Activated naive CD4-positive, alpha-beta T cell treated with anti-CD3 and anti-CD28 coated beads for 36 hours (primary cell): ENCODE measurements at regions of chr4 and their contacts with region 1.

Region 1: DNA sequence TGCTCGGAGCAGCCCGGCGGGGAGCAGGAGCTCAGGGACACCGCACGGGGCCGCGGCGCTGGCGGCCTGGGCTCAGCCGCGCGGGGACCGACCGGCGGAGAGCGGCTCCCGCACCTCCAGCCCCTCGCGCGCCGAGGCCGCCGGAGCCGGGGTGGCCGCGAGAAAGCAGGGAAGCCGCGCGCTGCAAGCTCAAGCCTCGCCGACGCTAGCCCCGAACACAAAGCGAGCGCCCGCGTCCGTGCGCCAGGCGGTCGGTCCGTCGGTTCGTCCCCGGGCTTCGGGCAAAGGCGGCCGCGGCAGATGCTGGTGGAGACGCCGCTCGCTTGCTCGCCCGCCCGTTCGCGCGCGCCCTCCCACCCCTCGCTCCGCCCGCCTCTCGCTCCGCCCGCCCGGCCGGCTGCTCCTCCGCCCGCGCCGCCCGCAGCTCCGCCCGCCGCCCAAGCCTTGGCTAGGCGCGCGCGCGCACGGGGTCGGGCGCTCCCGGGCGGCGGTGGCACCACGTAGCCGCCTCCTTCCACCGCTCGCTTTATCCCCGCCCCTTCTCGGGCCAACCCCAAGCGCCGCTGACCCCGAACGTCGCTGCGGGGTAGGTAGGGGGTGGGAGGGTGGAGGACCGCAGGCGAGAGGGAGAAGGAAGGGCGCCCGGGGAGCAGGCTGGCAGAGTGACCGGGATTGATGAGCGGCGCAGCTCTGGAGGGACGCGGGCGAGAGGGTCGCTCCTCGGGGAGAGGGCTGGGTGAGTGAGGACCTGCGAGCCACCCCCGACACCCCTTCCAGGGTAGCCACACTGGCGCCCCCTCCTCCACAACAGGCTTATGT is at the start of gene TSPAN5:
- DNase-seq: peak; percentile 77
- H3K4me3 Mint-ChIP-seq: peak within 1 kb of the TSS; percentile 98
- H3K27ac Mint-ChIP-seq: peak within 1 kb of the TSS; percentile 71
- H3K4me1 Mint-ChIP-seq: peaks cover 74% of the 10 kb centered on the region
- H3K27me3 Mint-ChIP-seq: no peaks in the 10 kb centered on the region
- total RNA-seq, gene TSPAN5: 12.5 to 13.1 TPM

Region 2: GRCh38 chr4:98260579-98261290 is 397.8 kb before region 1 on chr4:
- CTCF ChIA-PET with region 1: no interaction called
- intact Hi-C with region 1: loop called (anchors 1 kb)
- DNase-seq: peak; percentile 95
- H3K4me3 Mint-ChIP-seq: peak overlapping the region; percentile 93
- H3K27ac Mint-ChIP-seq: peak overlapping the region; percentile 94
- H3K4me1 Mint-ChIP-seq: peaks cover 43% of the 10 kb centered on the region
- H3K27me3 Mint-ChIP-seq: no peaks in the 10 kb centered on the region

Region 3: DNA sequence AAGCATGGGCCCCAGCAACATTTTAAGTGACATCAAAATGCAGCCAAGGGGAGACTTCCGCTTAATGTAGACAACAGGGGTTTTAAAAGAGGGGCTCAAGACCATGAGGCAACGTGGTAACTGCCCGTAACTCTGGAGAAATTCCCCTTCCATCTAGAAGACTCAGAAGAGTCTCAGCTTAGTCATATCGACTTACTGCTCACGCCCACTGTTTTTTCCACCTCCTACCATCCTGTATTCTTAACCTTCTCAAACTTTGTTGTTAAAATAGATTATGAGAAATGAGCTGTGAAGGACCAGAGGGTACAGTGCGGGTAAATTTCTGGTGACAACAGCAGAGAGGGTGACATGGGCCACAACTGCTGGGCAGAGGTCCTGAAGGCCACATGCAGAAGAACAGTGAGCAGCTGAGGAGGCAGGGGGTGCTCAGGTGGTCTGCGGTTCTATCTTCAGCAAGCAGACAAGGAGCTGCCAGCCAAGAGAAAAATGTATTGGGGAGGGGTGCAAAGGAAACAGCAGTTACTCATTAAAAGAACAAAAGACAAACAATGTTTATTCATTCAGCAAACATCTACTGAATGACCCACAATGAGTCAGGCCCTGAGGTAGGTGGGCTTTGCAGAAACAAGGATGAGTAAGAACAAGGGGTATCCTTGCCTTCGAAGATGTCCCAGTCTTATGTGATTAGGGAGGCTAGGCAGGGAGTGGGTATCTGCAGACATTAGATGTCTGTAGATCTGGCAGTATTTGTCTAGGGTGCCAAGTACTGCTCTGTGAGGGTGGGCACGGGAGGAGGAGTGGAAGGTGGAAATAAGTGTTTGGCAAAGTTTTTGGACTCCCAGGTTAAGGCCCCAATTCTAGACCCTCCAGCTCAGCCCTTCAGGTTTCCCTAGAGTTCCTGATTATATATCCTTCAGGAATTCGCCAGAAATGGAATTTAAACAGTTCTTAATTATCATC is 175.4 kb before region 1 on chr4:
- CTCF ChIA-PET with region 1: interaction called, 4 read pairs
- intact Hi-C with region 1: loop called (anchors 1 kb)
- DNase-seq: peak; percentile 74
- H3K4me3 Mint-ChIP-seq: peak overlapping the region; percentile 45
- H3K27ac Mint-ChIP-seq: peak overlapping the region; percentile 94
- H3K4me1 Mint-ChIP-seq: peaks cover 78% of the 10 kb centered on the region
- H3K27me3 Mint-ChIP-seq: no peaks in the 10 kb centered on the region

Region 4: DNA sequence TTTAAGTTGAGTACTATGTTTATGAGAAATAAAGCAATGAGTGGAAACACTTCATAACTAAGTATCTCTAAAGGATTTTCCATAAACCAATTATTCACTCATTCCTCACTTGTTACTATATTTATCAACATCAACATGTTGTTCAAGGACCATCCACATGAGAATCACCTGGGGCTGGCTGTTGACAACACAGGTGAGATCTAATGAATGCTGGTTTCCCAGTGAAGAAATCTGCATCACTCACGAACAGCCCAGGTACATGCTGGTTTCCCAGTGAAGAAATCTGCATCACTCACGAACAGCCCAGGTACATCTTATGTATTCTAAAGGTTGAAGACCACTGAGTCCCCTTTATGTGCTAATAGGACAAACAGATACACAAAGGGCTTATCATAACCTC is 32.6 kb before region 1 on chr4:
- CTCF ChIA-PET with region 1: no interaction called
- intact Hi-C with region 1: loop called (anchors 1 kb)
- DNase-seq: no peak
- H3K4me3 Mint-ChIP-seq: no peak overlapping the region
- H3K27ac Mint-ChIP-seq: no peak overlapping the region
- H3K4me1 Mint-ChIP-seq: peaks cover 51% of the 10 kb centered on the region
- H3K27me3 Mint-ChIP-seq: no peaks in the 10 kb centered on the region

Region 5: DNA sequence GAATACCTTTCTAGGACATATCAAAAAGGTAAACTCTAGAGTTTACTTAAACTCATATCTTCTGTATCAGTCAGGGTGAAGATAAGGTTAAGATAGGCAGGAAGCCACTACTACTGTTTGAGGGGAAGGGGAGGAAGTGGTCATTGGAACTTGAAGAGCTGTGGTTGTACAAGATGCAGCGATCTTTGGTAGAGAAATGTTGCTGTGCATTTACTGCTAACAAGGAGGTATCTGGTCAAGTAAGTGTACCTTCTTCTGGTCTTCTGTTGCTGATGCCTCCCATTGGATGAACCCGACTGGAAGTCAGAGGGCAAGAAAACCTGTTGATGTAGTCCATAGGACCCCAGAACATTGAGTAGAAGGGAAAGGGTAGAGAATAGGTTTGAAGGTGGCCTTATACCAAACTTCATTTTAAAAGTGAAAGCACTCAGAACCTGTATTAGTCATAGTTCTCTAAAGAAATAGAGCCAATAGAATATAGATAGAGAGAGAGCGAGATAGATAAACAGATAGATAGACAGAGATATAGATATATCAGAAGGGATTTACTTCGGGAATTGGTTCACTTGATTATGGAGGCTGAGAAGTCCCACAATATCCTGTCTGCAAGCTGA is 47.8 kb after region 1 on chr4:
- CTCF ChIA-PET with region 1: no interaction called
- intact Hi-C with region 1: loop called (anchors 1 kb)
- DNase-seq: peak; percentile 15
- H3K4me3 Mint-ChIP-seq: no peak overlapping the region
- H3K27ac Mint-ChIP-seq: peak overlapping the region; percentile 39
- H3K4me1 Mint-ChIP-seq: peaks cover 24% of the 10 kb centered on the region
- H3K27me3 Mint-ChIP-seq: no peaks in the 10 kb centered on the region

Region 6: GRCh38 chr4:98995183-98996055 is 336.9 kb after region 1 on chr4 and contains the start of gene METAP1:
- CTCF ChIA-PET with region 1: no interaction called
- intact Hi-C with region 1: loop called (anchors 1 kb)
- DNase-seq: peak; percentile 95
- H3K4me3 Mint-ChIP-seq: peak within 1 kb of the TSS; percentile 84
- H3K27ac Mint-ChIP-seq: peak within 1 kb of the TSS; percentile 92
- H3K4me1 Mint-ChIP-seq: peaks cover 38% of the 10 kb centered on the region
- H3K27me3 Mint-ChIP-seq: no peaks in the 10 kb centered on the region
- total RNA-seq, gene METAP1: 65.6 to 70.1 TPM

Region 7: DNA sequence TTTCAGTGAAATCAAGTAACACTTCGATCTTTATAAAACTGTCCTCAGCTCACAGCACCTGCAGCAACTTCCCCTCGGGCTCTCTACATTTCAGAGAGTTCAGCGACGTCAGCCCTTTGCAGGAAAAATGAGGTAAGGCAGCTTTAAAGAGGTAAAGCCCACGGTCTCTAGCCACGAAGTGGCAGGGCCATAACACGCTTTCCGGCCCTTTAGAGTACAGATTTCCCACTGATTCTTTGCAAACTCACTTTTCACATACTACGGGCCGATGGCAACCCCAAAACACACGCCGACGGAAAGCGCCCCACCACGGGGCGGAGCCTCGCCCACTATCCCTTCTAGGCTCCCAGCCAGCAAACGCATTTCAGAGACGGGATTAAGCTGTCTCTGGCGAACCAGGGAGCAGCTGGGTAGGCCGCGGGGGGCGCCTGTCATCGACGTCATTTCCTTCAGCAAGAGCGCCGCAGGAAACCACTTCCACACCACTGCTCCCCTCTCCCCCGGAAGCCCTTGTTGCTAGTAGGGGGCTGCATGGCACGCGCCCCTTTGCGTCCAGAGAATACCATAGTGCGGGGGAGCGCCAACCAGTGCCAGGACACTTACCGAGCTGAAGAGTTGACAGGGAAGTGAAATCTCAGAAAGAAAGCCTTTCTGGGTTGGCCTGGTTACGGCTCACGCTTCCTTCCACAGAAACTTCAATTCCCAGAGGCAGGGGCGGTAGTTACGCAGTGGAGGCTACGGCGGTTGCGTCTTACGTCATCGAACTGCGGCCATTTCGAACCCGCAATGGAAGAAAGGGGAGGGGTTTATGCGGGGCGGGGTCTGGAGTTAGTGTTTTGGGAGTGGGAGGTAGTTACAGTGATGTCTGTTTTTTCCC is 905.1 kb after region 1 on chr4 and contains the start of gene TRMT10A:
- CTCF ChIA-PET with region 1: no interaction called
- intact Hi-C with region 1: loop called (anchors 1 kb)
- DNase-seq: peak; percentile 97
- H3K4me3 Mint-ChIP-seq: peak within 1 kb of the TSS; percentile 93
- H3K27ac Mint-ChIP-seq: peak within 1 kb of the TSS; percentile 96
- H3K4me1 Mint-ChIP-seq: peaks cover 14% of the 10 kb centered on the region
- H3K27me3 Mint-ChIP-seq: peaks cover 6% of the 10 kb centered on the region
- total RNA-seq, gene TRMT10A: 8.8 to 9.2 TPM